Heart right ventricle (tissue), 16 donors: ENCODE measurements at regions of chr19 and their contacts with region 1.

Region 1: DNA sequence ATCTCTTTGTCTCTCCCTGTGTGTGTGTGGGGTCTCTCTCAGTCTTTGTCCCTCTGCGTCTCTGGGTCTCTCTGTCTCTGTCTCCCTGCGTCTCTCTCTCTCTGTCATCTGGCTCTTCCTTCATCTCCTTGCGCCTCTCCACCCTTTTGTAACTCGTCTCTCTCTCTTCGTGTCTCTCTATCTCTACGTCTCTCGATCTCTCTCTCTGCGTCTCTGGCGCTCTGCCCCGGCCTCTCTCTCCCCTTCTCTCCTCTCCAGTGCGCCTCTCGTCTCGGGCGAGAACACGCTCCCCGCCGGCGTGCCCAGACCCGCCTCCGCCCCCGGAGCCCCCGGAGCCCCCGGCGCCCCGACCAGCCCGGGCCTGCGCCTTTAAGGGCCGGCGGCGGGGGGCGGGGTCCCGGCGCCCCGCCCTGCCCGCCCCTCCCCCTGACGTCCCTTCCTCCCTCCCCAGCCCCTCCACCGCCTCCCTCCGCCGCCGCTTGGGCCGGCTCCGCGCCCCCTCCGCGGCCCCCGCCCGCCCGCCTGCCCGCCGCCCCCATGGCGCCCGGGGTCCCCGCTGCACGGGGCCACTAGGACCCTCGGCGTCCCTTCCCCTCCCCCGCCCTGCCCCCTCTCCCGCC is at the start of gene MARK4:
- DNase-seq: peak; percentile 52 to 64
- ATAC-seq: peak; percentile 36 to 84 (median 56)
- H3K4me3 ChIP-seq: peak within 1 kb of the TSS; percentile 67 to 98 (median 89)
- H3K27ac ChIP-seq: peak within 1 kb of the TSS in 9 of 10 donors; percentile 22 to 87 (median 82)
- H3K4me1 ChIP-seq: peaks cover 14 to 58% (median 36%) of the 10 kb centered on the region in 9 donors
- H3K27me3 ChIP-seq: no peaks in the 10 kb centered on the region
- CTCF ChIP-seq: no peak
- total RNA-seq, gene MARK4: 24.8 to 45.3 (median 33.7) TPM

Region 2: GRCh38 chr19:45323671-45324081 is 72.7 kb after region 1 on chr19:
- intact Hi-C with region 1: loop called in 3 of 10 experiments (anchors 5 to 10 kb)
- DNase-seq: peak; percentile 74 to 76
- ATAC-seq: peak; percentile 68 to 82 (median 75)
- H3K4me3 ChIP-seq: peak overlapping the region in 9 of 10 donors; percentile 39 to 64 (median 59)
- H3K27ac ChIP-seq: peak overlapping the region; percentile 79 to 99 (median 96)
- H3K4me1 ChIP-seq: peaks cover 0 to 46% (median 8%) of the 10 kb centered on the region in 9 donors
- H3K27me3 ChIP-seq: peaks cover 0 to 30% (median 17%) of the 10 kb centered on the region in 7 donors
- CTCF ChIP-seq: no peak

Region 3: GRCh38 chr19:45331423-45331822 is 80.5 kb after region 1 on chr19:
- intact Hi-C with region 1: loop called in 6 of 10 experiments (anchors 5 to 10 kb)
- DNase-seq: no peak
- ATAC-seq: no peak
- H3K4me3 ChIP-seq: no peak overlapping the region
- H3K27ac ChIP-seq: no peak overlapping the region
- H3K4me1 ChIP-seq: peaks cover 0 to 1% (median 0%) of the 10 kb centered on the region in 9 donors
- H3K27me3 ChIP-seq: no peaks in the 10 kb centered on the region
- CTCF ChIP-seq: no peak

Region 4: GRCh38 chr19:45340232-45340898 is 89.4 kb after region 1 on chr19 and contains the start of gene KLC3:
- intact Hi-C with region 1: loop called in 3 of 10 experiments (anchors 5 to 10 kb)
- DNase-seq: no peak
- ATAC-seq: peak in 1 of 8 donors; percentile 34
- H3K4me3 ChIP-seq: peak within 1 kb of the TSS in 8 of 10 donors; percentile 17 to 34 (median 30)
- H3K27ac ChIP-seq: no peak within 1 kb of the TSS
- H3K4me1 ChIP-seq: peaks cover 0 to 10% (median 5%) of the 10 kb centered on the region in 9 donors
- H3K27me3 ChIP-seq: peaks cover 6 to 39% (median 29%) of the 10 kb centered on the region in 7 donors
- CTCF ChIP-seq: no peak
- total RNA-seq, gene KLC3: 0.14 TPM in 2 of 10 donors, not detected in the others